OCI-LY7 (cell line): ENCODE measurements at regions of chr7 and their contacts with region 1.

Region 1: GRCh38 chr7:100374601-100375000 is 1.3 kb downstream of the PILRA start:
- DNase-seq: peak; percentile 22
- H3K4me3 ChIP-seq: peak overlapping the region; percentile 11
- H3K27ac ChIP-seq: no peak overlapping the region
- H3K4me1 ChIP-seq: peaks cover 45% of the 10 kb centered on the region
- CTCF ChIP-seq: no peak

Region 2: GRCh38 chr7:100407285-100408180 is 32.9 kb after region 1 on chr7:
- CTCF ChIA-PET with region 1: interaction called, 4 read pairs
- POLR2A ChIA-PET with region 1: interaction called, 3 read pairs
- intact Hi-C with region 1: loop called (anchors 1 kb)
- DNase-seq: peak; percentile 83
- H3K4me3 ChIP-seq: no peak overlapping the region
- H3K27ac ChIP-seq: no peak overlapping the region
- H3K4me1 ChIP-seq: peaks cover 33% of the 10 kb centered on the region
- CTCF ChIP-seq: peak; percentile 89